ENCODE measurements at regions of chr14 and their contacts with region 1.

Region 1: DNA sequence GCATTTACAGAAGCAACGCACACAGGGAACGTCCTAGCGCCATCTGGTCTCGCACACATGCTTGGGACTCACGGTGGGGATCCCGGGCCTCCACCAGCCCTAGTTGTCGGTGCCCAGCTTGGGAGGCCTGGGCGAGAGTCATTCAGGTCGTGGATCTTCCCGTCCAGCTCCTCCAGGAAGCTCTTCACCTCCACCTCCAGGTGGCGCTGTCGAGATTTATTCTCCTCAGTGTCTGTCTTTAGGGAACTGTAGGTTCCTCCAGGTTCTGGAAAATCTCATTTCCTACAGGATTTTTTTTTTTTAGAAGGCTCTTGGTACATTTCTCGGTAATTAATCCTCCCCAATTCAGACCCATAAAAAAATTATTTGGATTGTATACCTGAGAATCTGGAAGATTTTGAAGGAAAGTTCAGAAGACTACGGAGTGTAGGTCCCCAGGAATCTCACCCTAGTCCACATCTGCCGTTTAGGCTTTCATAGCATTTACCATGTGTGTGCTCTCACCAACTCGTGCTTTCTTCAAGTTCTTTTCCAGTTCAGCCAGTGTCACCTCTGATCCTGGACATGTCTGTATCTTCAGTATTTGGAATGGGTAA is 910.0 kb downstream of the TMEM121 start:
- DNase-seq: no peak
- ATAC-seq: peak; percentile 68
- H3K4me3 ChIP-seq: no peak overlapping the region
- H3K27ac ChIP-seq: no peak overlapping the region
- H3K4me1 ChIP-seq: no peaks in the 10 kb centered on the region
- H3K27me3 ChIP-seq: peaks cover 0 to 6% of the 10 kb centered on the region in 2 experiments; a peak in 2 of 4 replicates
- CTCF ChIP-seq: peak; percentile 58 to 83 (median 70)
- EP300 ChIP-seq: no peak
- POLR2A ChIP-seq: no peak
- RAD21 ChIP-seq: peak; percentile 64

Region 2: DNA sequence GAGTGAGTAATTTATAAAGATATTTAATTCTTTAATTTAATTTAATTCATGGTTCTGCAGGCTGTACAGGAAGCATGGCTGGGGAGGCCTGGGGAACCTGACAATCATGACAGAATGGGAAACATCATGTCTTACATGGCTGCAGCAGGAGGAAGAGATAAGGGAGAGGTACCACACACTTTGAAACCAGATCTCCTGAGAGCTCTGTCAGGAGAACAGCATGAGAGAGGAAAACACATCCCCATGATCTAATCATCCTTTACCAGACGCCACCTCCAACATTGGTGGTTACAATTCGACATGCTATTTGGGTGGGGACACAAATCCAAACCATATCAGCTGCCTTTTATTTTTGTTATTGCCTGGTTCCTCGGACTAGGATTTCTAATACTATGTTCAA is 18.6 kb after region 1 on chr14:
- CTCF ChIA-PET with region 1: interaction called, 19 read pairs
- POLR2A ChIA-PET with region 1: no interaction called
- RAD21 ChIA-PET with region 1: interaction called, 3 read pairs
- SMC1A ChIA-PET with region 1: no interaction called
- in situ Hi-C with region 1: no loop called
- intact Hi-C with region 1: no loop called
- DNase-seq: no peak
- ATAC-seq: no peak
- H3K4me3 ChIP-seq: no peak overlapping the region
- H3K27ac ChIP-seq: no peak overlapping the region
- H3K4me1 ChIP-seq: no peaks in the 10 kb centered on the region
- H3K27me3 ChIP-seq: no peaks in the 10 kb centered on the region
- CTCF ChIP-seq: no peak
- EP300 ChIP-seq: no peak
- POLR2A ChIP-seq: no peak
- RAD21 ChIP-seq: no peak

Region 3: GRCh38 chr14:106491851-106492250 is 55.4 kb after region 1 on chr14:
- CTCF ChIA-PET with region 1: interaction called, 15 read pairs
- POLR2A ChIA-PET with region 1: no interaction called
- RAD21 ChIA-PET with region 1: interaction called, 11 read pairs
- SMC1A ChIA-PET with region 1: interaction called, 4 read pairs
- in situ Hi-C with region 1: no loop called
- intact Hi-C with region 1: no loop called
- DNase-seq: no peak
- ATAC-seq: no peak
- H3K4me3 ChIP-seq: no peak overlapping the region
- H3K27ac ChIP-seq: no peak overlapping the region
- H3K4me1 ChIP-seq: no peaks in the 10 kb centered on the region
- H3K27me3 ChIP-seq: peaks cover 0 to 4% of the 10 kb centered on the region in 2 experiments; a peak in 1 of 4 replicates
- CTCF ChIP-seq: peak; percentile 30 to 64 (median 58); a peak in 5 of 6 replicates
- EP300 ChIP-seq: no peak
- POLR2A ChIP-seq: no peak
- RAD21 ChIP-seq: peak; percentile 68

Region 4: DNA sequence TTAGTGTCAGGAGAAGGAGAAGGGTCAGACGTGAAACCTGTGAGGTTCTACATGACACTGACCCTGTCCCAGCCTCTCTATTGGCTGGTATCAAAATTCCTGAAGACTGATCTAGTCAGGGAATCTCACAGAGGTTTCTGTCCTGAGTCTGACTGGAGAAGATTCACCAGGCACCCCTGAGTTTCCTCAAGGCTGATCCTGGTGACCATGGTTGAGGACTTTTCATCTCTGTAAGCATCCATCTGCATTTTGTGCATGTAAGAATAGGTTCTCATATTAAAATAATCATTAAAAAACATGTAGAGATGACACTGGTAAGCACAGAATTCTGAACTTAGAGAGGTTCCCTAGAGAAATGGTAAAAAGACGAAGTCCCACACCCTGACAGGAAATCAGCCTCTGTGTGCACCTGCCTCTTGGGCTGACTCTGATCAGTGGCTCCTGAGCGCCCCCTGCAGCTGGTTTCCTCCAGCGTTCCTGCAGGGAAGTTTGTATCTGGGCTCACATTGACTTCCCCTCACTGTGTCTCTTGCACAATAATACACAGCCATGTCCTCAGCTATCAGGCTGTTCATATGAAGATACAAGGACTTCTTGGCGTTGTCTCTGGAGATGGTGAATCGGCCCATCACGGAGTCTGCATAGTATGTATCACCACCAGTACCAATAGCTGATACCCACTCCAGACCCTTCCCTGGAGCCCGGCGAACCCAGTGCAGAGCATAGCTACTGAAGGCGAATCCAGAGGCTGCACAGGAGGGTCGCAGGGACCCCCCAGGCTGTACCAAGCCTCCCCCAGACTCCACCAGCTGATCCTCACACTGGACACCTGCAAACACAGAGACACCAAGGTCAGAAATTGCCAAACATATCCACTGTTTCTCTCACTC is 81.9 kb after region 1 on chr14:
- CTCF ChIA-PET with region 1: interaction called, 66 read pairs
- POLR2A ChIA-PET with region 1: no interaction called
- RAD21 ChIA-PET with region 1: interaction called, 8 read pairs
- SMC1A ChIA-PET with region 1: interaction called, 11 read pairs
- in situ Hi-C with region 1: loop called (anchors 5 kb)
- intact Hi-C with region 1: loop called (anchors 2 kb)
- DNase-seq: no peak
- ATAC-seq: peak; percentile 84
- H3K4me3 ChIP-seq: no peak overlapping the region
- H3K27ac ChIP-seq: no peak overlapping the region
- H3K4me1 ChIP-seq: peaks cover 10% of the 10 kb centered on the region
- H3K27me3 ChIP-seq: no peaks in the 10 kb centered on the region; a peak in 1 of 4 replicates
- CTCF ChIP-seq: peak; percentile 63 to 76 (median 75)
- EP300 ChIP-seq: no peak
- POLR2A ChIP-seq: no peak
- RAD21 ChIP-seq: peak; percentile 78

Region 5: DNA sequence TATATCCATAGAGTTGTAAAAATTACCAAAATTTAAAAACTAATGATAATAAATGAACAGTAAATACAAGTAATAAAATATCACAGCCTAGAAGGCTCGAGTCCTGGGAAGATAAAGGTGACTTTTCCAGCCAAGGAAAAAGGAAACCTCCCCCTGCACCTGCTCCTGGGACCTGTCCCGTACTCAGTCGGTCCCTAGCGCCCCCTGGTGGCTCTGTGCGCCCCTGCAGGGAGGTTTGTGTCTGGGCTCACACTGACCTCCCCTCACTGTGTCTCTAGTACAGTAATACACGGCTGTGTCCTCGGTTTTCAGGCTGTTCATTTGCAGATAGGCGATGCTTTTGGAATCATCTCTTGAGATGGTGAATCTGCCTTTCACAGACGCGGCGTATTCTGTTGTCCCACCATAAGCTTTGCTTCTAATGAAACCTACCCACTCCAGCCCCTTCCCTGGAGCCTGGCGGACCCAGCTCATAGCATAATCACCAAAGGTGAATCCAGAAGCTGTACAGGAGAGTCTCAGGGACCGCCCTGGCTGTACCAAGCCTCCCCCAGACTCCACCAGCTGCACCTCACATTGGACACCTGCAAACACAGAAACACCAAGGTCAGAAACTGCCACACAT is 120.4 kb after region 1 on chr14:
- CTCF ChIA-PET with region 1: interaction called, 13 read pairs
- POLR2A ChIA-PET with region 1: no interaction called
- RAD21 ChIA-PET with region 1: interaction called, 4 read pairs
- SMC1A ChIA-PET with region 1: interaction called, 3 read pairs
- in situ Hi-C with region 1: no loop called
- intact Hi-C with region 1: no loop called
- DNase-seq: no peak
- ATAC-seq: peak; percentile 89
- H3K4me3 ChIP-seq: no peak overlapping the region
- H3K27ac ChIP-seq: no peak overlapping the region
- H3K4me1 ChIP-seq: no peaks in the 10 kb centered on the region
- H3K27me3 ChIP-seq: no peaks in the 10 kb centered on the region
- CTCF ChIP-seq: peak; percentile 71 to 94 (median 93)
- EP300 ChIP-seq: no peak
- POLR2A ChIP-seq: no peak
- RAD21 ChIP-seq: peak; percentile 73

Measured in GM12878 (cell line).